ENCODE measurements at regions of chr17 and their contacts with region 1.

Region 1: GRCh38 chr17:409848-410545 is 57.4 kb upstream of the RPH3AL start:
- DNase-seq: peak; percentile 100
- ATAC-seq: peak; percentile 88
- H3K4me3 Mint-ChIP-seq: peak overlapping the region; percentile 78
- H3K27ac Mint-ChIP-seq: peak overlapping the region; percentile 92
- H3K4me1 Mint-ChIP-seq: peaks cover 54% of the 10 kb centered on the region
- H3K27me3 Mint-ChIP-seq: peaks cover 3% of the 10 kb centered on the region

Region 2: GRCh38 chr17:181215-182049 is 228.6 kb before region 1 on chr17 and contains the start of gene DOC2B:
- CTCF ChIA-PET with region 1: no interaction called
- DNase-seq: no peak
- ATAC-seq: peak; percentile 59
- H3K4me3 Mint-ChIP-seq: peak within 1 kb of the TSS; percentile 21
- H3K27ac Mint-ChIP-seq: no peak within 1 kb of the TSS
- H3K4me1 Mint-ChIP-seq: peaks cover 21% of the 10 kb centered on the region
- H3K27me3 Mint-ChIP-seq: peaks cover 49% of the 10 kb centered on the region
- total RNA-seq, gene DOC2B: 0.05 TPM in 1 of 2 experiments, not detected in the other

Region 3: GRCh38 chr17:282000-282911 is 127.7 kb before region 1 on chr17:
- CTCF ChIA-PET with region 1: no interaction called
- DNase-seq: no peak
- ATAC-seq: no peak
- H3K4me3 Mint-ChIP-seq: no peak overlapping the region
- H3K27ac Mint-ChIP-seq: no peak overlapping the region
- H3K4me1 Mint-ChIP-seq: no peaks in the 10 kb centered on the region
- H3K27me3 Mint-ChIP-seq: no peaks in the 10 kb centered on the region

Region 4: DNA sequence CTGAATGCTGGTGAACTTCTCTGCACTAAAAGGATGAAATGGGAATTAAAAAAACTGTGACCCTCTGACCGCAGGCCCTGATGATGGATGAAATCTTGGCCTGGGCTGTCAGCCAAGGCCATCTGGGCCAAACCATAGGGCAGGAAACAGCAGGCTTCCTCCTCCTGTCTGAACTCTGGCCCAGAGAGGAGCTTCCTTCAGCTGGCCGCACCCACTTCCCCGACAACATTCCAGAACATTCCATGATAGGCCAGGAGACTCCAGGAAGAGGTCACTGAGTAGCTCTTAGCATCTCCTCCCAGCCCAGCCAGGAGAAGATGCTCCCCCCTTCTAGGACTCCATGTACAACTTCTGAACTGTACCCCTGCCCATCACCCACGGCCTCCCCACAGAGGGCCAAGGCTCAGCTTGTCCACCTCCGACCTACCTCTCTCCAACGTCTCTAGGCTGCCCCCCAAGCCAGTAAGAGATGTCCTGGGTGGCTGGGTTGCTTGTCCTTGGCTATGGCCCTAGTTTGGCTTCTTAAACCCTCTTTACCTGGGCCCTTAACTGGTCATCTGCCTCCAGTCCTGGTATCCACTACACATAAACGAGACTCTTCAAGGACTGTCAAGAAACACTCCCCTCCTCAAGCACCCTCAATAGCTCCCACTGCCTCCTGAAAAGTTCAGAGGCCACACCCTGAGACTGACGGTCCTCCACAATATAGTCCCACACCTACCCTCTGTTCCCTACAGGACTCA is 59.1 kb before region 1 on chr17:
- CTCF ChIA-PET with region 1: no interaction called
- DNase-seq: no peak
- ATAC-seq: no peak
- H3K4me3 Mint-ChIP-seq: no peak overlapping the region
- H3K27ac Mint-ChIP-seq: no peak overlapping the region
- H3K4me1 Mint-ChIP-seq: no peaks in the 10 kb centered on the region
- H3K27me3 Mint-ChIP-seq: no peaks in the 10 kb centered on the region

Region 5: DNA sequence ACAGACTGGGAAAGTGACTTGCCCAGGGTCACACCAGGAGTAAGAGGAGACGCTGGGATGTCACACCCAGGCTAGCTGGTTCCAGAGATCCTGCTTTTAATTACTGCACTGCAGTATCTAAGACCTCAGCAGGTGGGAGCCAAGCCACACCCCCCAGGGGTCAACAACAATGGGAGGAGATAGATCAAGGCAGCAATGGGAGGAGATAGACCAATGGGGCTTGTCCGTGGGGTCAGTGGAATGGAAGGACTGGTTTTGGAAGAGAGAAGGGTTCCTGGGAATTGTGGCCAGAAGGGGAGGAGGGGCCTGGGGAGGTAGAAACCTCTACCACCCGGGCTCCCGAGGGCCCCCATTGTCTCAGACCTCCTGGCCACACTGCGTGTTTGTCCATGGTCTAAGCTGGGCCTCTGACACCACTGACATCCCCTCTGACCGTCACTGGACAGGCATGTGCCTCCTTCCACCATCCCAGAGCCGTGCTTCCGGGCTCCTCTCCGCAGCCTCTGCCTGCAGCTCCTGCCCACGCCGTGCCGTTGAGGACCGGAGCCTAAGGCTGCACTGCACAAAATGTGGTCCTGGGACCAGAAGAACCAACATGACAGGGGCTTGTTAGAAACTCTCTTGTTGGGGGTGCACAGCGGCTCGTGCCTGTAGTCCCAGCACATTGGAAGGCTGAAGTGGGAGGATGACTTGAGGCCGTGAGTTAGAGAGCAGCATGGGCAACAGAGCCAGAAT is 12.4 kb after region 1 on chr17:
- CTCF ChIA-PET with region 1: interaction called, 10 read pairs
- DNase-seq: no peak
- ATAC-seq: no peak
- H3K4me3 Mint-ChIP-seq: no peak overlapping the region
- H3K27ac Mint-ChIP-seq: no peak overlapping the region
- H3K4me1 Mint-ChIP-seq: peaks cover 40% of the 10 kb centered on the region
- H3K27me3 Mint-ChIP-seq: peaks cover 3% of the 10 kb centered on the region

Region 6: GRCh38 chr17:534071-534691 is 124.2 kb after region 1 on chr17:
- CTCF ChIA-PET with region 1: interaction called, 12 read pairs
- DNase-seq: no peak
- ATAC-seq: no peak
- H3K4me3 Mint-ChIP-seq: no peak overlapping the region
- H3K27ac Mint-ChIP-seq: peak overlapping the region; percentile 61
- H3K4me1 Mint-ChIP-seq: peaks cover 7% of the 10 kb centered on the region
- H3K27me3 Mint-ChIP-seq: no peaks in the 10 kb centered on the region

Region 7: DNA sequence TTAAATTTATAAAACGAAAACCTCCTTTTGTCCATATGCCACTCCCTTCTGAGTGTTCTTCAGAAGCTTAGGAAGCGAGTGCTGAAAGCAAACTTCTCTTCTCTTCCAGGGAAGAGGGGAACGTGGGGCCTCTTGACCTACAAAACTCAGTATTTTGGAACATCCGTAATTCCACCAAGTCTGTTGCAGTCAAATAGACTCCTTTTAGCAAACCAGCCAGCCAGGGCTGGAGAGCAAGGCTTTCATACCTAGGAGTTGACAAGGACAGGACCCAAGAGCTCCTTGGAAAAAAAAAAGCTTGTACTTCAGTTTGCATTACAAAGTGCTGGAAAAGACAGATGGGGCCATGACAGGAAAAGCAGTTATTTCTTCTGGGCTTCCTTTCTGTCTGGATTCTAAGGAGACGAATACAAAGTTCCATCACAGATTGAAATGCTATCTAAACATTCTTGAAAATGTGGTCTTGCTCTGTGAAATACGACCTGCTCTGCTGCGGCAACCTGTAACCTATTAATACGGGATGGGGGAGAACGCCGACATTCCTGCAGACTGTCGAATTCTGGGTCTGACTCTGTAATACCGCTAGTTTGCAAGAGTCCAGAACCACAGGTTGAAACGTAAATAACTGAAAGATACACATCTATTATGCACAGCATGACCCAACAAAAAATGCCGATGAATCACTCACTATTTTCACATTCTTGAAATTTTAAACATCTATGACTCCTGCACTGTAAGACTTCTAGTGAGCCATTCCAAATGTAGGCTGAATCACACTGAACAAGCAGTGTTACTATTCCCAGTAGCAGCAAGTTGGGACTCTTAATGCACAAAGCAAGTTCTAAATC is 284.0 kb after region 1 on chr17:
- CTCF ChIA-PET with region 1: interaction called, 128 read pairs
- DNase-seq: no peak
- ATAC-seq: no peak
- H3K4me3 Mint-ChIP-seq: no peak overlapping the region
- H3K27ac Mint-ChIP-seq: no peak overlapping the region
- H3K4me1 Mint-ChIP-seq: no peaks in the 10 kb centered on the region
- H3K27me3 Mint-ChIP-seq: no peaks in the 10 kb centered on the region

Region 8: GRCh38 chr17:716238-716637 is 306.2 kb after region 1 on chr17:
- CTCF ChIA-PET with region 1: interaction called, 15 read pairs
- DNase-seq: no peak
- ATAC-seq: no peak
- H3K4me3 Mint-ChIP-seq: no peak overlapping the region
- H3K27ac Mint-ChIP-seq: no peak overlapping the region
- H3K4me1 Mint-ChIP-seq: peaks cover 28% of the 10 kb centered on the region
- H3K27me3 Mint-ChIP-seq: peaks cover 3% of the 10 kb centered on the region

Region 9: GRCh38 chr17:979538-980405 is 569.8 kb after region 1 on chr17 and contains the start of gene NXN:
- CTCF ChIA-PET with region 1: interaction called, 11 read pairs
- DNase-seq: peak; percentile 89
- ATAC-seq: peak; percentile 94
- H3K4me3 Mint-ChIP-seq: peak within 1 kb of the TSS; percentile 59
- H3K27ac Mint-ChIP-seq: no peak within 1 kb of the TSS
- H3K4me1 Mint-ChIP-seq: peaks cover 9% of the 10 kb centered on the region
- H3K27me3 Mint-ChIP-seq: peaks cover 36% of the 10 kb centered on the region
- total RNA-seq, gene NXN: 0.14 to 0.70 TPM